ENCODE measurements at regions of chr5 and their contacts with region 1.

Region 1: GRCh38 chr5:141557681-141558136 is 61.1 kb downstream of the DIAPH1 start:
- DNase-seq: peak; percentile 81 to 92
- H3K4me3 ChIP-seq: peak overlapping the region; percentile 5 to 17
- H3K27ac ChIP-seq: peak overlapping the region; percentile 78 to 79
- H3K4me1 ChIP-seq: peaks cover 0 to 26% (median 17%) of the 10 kb centered on the region in 4 donors
- H3K27me3 ChIP-seq: no peaks in the 10 kb centered on the region
- CTCF ChIP-seq: peak; percentile 76 to 88

Region 2: GRCh38 chr5:141412854-141413539 is 144.7 kb before region 1 on chr5 and contains the start of gene PCDHGA10:
- intact Hi-C with region 1: loop called (anchors 10 kb)
- DNase-seq: peak; percentile 41 to 56
- H3K4me3 ChIP-seq: peak within 1 kb of the TSS; percentile 22 to 26
- H3K27ac ChIP-seq: no peak within 1 kb of the TSS
- H3K4me1 ChIP-seq: no peaks in the 10 kb centered on the region
- H3K27me3 ChIP-seq: no peaks in the 10 kb centered on the region
- CTCF ChIP-seq: peak; percentile 16 to 20

Region 3: DNA sequence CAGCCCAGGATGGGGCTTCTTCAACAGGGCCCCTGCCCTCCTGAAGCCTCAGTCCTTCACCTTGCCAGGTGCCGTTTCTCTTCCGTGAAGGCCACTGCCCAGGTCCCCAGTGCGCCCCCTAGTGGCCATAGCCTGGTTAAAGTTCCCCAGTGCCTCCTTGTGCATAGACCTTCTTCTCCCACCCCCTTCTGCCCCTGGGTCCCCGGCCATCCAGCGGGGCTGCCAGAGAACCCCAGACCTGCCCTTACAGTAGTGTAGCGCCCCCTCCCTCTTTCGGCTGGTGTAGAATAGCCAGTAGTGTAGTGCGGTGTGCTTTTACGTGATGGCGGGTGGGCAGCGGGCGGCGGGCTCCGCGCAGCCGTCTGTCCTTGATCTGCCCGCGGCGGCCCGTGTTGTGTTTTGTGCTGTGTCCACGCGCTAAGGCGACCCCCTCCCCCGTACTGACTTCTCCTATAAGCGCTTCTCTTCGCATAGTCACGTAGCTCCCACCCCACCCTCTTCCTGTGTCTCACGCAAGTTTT is 45.3 kb before region 1 on chr5:
- intact Hi-C with region 1: loop called (anchors 5 kb)
- DNase-seq: peak; percentile 87 to 92
- H3K4me3 ChIP-seq: peak overlapping the region; percentile 66 to 71
- H3K27ac ChIP-seq: peak overlapping the region; percentile 91 to 95
- H3K4me1 ChIP-seq: peaks cover 0 to 74% (median 56%) of the 10 kb centered on the region in 4 donors
- H3K27me3 ChIP-seq: no peaks in the 10 kb centered on the region
- CTCF ChIP-seq: peak; percentile 77 to 87